ENCODE measurements at regions of chr6 and their contacts with region 1.

Region 1: GRCh38 chr6:45922728-45923351 is 92.8 kb downstream of the CLIC5 start:
- DNase-seq: peak; percentile 16
- H3K4me3 ChIP-seq: no peak overlapping the region
- H3K27ac ChIP-seq: no peak overlapping the region
- H3K27me3 ChIP-seq: no peaks in the 10 kb centered on the region
- CTCF ChIP-seq: peak; percentile 77

Region 2: GRCh38 chr6:44593539-44593944 is 1329.3 kb before region 1 on chr6:
- CTCF ChIA-PET with region 1: interaction called, 22 read pairs
- POLR2A ChIA-PET with region 1: no interaction called
- DNase-seq: peak; percentile 26
- H3K4me3 ChIP-seq: no peak overlapping the region
- H3K27ac ChIP-seq: no peak overlapping the region
- H3K27me3 ChIP-seq: peaks cover 16% of the 10 kb centered on the region
- CTCF ChIP-seq: peak; percentile 60

Measured in AG04450 (cell line).